ENCODE measurements at regions of chr1 and their contacts with region 1.

Region 1: DNA sequence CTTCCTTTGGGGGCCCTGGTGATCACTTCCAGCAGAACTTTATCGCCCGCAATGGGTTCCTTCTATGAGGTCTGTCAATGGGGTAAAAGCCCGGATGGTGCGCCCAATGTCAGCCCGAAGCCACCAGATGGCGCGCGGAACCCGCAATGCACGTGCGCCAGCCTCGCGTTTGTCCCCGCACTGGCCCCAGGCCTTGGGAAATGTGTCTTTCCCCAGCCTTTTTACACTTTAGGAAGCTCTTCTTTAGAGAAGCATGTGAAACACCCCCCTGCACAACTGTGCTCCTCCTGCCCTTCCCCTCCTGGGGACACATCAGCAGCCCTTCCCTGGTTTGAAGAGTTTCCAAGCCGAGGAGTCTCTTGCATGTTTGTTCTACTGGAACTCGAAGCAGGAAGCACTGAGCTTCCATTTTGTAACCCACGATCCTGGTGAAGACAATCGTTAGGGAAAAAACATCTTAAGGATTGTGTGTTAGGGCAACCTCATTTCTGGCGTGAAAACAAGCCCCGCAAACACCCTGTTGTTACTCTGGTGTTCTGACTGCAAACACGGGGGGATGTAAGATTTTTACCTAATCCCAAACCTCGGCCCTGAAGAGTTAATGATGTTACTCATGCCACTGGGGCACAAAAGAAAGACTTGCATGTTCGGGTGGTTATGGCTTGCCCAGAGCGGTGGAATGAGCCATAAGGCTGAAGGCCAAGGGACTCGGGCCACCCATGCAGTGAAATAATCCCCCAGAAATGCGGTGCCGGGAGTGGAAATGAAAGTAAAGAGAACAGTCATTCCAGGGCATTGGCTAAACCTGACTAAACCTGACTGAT is 20.4 kb upstream of the TARBP1 start:
- DNase-seq: peak; percentile 92
- H3K4me3 Mint-ChIP-seq: no peak overlapping the region
- H3K27ac Mint-ChIP-seq: peak overlapping the region; percentile 82
- H3K4me1 Mint-ChIP-seq: peaks cover 64% of the 10 kb centered on the region
- H3K27me3 Mint-ChIP-seq: no peaks in the 10 kb centered on the region

Region 2: DNA sequence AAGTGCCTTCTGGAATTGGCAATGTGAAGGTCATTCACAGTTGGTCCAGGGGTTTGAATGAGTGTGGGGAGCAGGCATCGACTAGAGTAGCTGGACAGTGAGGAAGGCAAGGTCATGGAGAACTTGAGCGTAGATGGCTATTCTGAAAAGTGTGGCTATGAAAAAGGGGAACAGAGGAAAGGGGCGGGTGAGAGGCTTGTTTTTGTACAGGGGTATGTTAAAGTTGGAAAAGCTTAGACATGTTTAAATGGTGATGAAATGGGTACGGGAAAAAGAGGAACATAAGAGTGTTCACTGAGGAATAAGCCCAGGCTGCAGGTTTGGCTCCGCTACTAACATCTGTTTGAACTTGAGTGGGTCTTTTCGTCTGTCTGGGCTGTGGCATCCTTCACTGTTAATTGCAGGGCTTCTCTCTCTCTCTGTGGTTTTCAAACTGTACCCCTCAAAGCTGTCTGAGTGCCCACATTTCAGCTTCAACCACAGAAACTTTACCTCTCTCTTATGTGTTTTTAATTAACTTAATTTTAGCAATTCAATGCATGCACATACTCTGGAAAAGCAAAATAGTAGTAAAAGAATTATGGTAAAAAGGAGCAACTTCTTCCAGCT is 196.9 kb before region 1 on chr1:
- CTCF ChIA-PET with region 1: no interaction called
- intact Hi-C with region 1: no loop called
- DNase-seq: no peak
- H3K4me3 Mint-ChIP-seq: no peak overlapping the region
- H3K27ac Mint-ChIP-seq: no peak overlapping the region
- H3K4me1 Mint-ChIP-seq: peaks cover 1% of the 10 kb centered on the region
- H3K27me3 Mint-ChIP-seq: peaks cover 5% of the 10 kb centered on the region

Region 3: GRCh38 chr1:234398849-234399381 is 100.4 kb before region 1 on chr1:
- CTCF ChIA-PET with region 1: no interaction called
- intact Hi-C with region 1: loop called (anchors 1 kb)
- DNase-seq: peak; percentile 23
- H3K4me3 Mint-ChIP-seq: peak overlapping the region; percentile 60
- H3K27ac Mint-ChIP-seq: peak overlapping the region; percentile 91
- H3K4me1 Mint-ChIP-seq: peaks cover 58% of the 10 kb centered on the region
- H3K27me3 Mint-ChIP-seq: no peaks in the 10 kb centered on the region

Region 4: GRCh38 chr1:234413990-234414389 is 85.3 kb before region 1 on chr1:
- CTCF ChIA-PET with region 1: no interaction called
- intact Hi-C with region 1: no loop called
- DNase-seq: no peak
- H3K4me3 Mint-ChIP-seq: no peak overlapping the region
- H3K27ac Mint-ChIP-seq: no peak overlapping the region
- H3K4me1 Mint-ChIP-seq: peaks cover 7% of the 10 kb centered on the region
- H3K27me3 Mint-ChIP-seq: no peaks in the 10 kb centered on the region

Region 5: DNA sequence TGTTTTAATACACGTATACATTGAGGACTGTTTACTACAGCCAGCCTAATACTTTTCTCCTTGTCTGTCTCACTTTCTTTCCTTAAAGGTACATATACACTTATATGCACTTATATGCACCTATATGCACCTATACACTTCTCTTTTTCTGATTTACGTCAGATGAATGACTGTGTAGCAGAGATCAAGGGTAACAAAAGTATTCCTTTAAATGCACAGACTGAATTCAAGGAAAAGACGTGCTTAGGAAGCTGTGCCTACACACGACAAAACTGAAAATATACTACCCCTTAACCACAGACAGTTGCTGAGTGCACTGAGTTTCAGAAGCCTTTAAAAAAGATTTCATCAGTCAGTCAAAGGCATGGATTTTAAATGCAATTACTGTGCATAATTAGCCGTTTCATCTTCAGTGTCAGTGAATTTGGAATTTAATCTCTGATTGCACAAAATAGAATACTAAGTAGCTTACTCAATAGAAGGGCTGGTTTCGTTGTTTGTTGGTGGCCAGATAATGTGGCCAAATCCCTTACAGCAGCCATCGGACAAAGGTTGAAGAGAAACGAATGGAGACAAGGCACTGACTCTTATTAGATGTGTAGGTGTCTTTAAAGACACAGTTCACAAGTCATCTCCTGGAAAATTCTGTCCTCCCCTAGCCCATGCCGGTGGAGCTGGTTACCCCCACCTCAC is 17.9 kb after region 1 on chr1:
- CTCF ChIA-PET with region 1: interaction called, 8 read pairs
- intact Hi-C with region 1: loop called (anchors 1 kb)
- DNase-seq: no peak
- H3K4me3 Mint-ChIP-seq: no peak overlapping the region
- H3K27ac Mint-ChIP-seq: no peak overlapping the region
- H3K4me1 Mint-ChIP-seq: peaks cover 24% of the 10 kb centered on the region
- H3K27me3 Mint-ChIP-seq: no peaks in the 10 kb centered on the region

Region 6: GRCh38 chr1:234599617-234600417 is 100.5 kb after region 1 on chr1:
- CTCF ChIA-PET with region 1: interaction called, 16 read pairs
- intact Hi-C with region 1: loop called (anchors 1 kb)
- DNase-seq: peak; percentile 74
- H3K4me3 Mint-ChIP-seq: peak overlapping the region; percentile 83
- H3K27ac Mint-ChIP-seq: peak overlapping the region; percentile 99
- H3K4me1 Mint-ChIP-seq: peaks cover 50% of the 10 kb centered on the region
- H3K27me3 Mint-ChIP-seq: no peaks in the 10 kb centered on the region

Region 7: DNA sequence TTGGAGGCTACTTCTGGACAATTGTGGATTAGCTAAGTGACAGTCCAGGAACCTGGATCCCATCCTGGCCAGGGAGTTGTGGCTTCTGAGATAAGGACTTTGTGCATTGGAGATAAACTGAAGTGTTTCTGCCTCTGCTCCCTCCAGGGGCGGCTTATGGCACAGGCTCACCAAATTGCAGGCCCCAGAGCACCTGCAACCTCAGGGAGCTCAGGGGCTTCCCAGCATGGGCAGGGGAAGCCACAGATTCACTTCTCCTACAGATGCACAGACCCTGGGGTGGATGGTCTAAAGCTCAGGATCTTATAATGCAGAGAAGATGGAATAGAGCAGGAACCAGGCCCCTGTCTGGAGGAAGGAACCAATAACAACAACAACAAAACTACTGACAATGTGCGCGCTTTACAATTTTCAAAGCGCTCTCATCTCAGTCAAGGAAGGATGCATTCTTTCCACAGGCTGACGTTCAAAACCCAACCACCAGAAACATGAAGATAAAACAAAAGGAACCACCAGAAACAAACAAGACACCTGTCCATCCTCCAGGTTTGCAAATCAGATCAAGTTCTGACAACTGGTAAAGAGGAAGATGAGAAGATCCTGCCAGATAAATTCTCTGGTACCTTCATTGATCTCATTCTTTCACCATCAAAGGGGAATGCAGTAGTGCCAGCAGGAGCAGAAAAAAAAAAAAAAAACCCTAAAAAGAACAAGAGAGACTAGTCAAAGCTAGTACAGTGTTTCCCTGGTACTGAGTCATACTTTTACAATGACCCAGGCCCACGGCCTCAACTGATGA is 231.6 kb after region 1 on chr1:
- CTCF ChIA-PET with region 1: interaction called, 3 read pairs
- intact Hi-C with region 1: loop called (anchors 1 kb)
- DNase-seq: peak; percentile 83
- H3K4me3 Mint-ChIP-seq: peak overlapping the region; percentile 25
- H3K27ac Mint-ChIP-seq: peak overlapping the region; percentile 89
- H3K4me1 Mint-ChIP-seq: peaks cover 51% of the 10 kb centered on the region
- H3K27me3 Mint-ChIP-seq: no peaks in the 10 kb centered on the region

Region 8: GRCh38 chr1:234963180-234963903 is 464.0 kb after region 1 on chr1:
- CTCF ChIA-PET with region 1: no interaction called
- intact Hi-C with region 1: loop called (anchors 1 kb)
- DNase-seq: peak; percentile 98
- H3K4me3 Mint-ChIP-seq: peak overlapping the region; percentile 35
- H3K27ac Mint-ChIP-seq: peak overlapping the region; percentile 97
- H3K4me1 Mint-ChIP-seq: peaks cover 72% of the 10 kb centered on the region
- H3K27me3 Mint-ChIP-seq: no peaks in the 10 kb centered on the region

Region 9: GRCh38 chr1:235004840-235005391 is 505.6 kb after region 1 on chr1:
- CTCF ChIA-PET with region 1: no interaction called
- intact Hi-C with region 1: no loop called
- DNase-seq: no peak
- H3K4me3 Mint-ChIP-seq: no peak overlapping the region
- H3K27ac Mint-ChIP-seq: peak overlapping the region; percentile 7
- H3K4me1 Mint-ChIP-seq: peaks cover 58% of the 10 kb centered on the region
- H3K27me3 Mint-ChIP-seq: no peaks in the 10 kb centered on the region

Region 10: DNA sequence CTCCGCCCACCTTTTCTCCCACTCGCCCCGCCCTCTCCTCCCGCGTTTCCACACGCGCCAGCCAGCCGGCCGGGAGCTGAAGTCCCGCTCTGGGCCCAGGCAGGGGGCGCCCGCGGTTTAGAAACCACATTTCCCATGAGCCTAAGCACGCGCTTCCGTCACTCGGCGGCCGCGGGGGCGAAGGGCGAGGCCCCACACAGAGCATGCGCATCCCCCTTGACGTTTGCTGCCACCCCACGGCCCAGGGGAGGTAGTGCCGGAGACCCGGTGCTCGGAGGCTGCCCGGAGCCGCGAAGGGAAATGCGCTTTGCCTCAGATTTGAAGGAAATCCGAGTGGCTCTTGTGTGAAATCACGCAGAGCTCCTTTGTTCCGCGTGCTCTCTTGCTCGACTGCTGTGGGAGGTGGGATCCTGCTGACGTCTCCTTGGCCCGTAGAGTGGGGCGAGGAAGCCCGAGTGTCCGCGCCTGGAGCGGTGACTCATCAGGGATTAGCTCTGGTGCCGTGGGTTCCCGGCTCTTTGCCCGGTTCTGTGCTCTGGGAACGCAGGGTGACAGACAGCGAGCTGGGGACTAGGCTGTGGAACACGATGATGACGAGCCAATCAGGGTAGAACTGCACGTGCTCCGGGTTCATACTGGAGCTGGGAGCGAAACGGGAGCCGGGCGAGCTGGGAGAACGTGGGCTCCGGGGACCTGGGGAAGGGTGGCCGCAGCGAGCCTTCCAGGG is 1005.3 kb after region 1 on chr1:
- CTCF ChIA-PET with region 1: no interaction called
- intact Hi-C with region 1: loop called (anchors 2 kb)
- DNase-seq: peak; percentile 99
- H3K4me3 Mint-ChIP-seq: peak overlapping the region; percentile 97
- H3K27ac Mint-ChIP-seq: peak overlapping the region; percentile 97
- H3K4me1 Mint-ChIP-seq: peaks cover 31% of the 10 kb centered on the region
- H3K27me3 Mint-ChIP-seq: no peaks in the 10 kb centered on the region